Caco-2 (cell line): ENCODE measurements at regions of chr11 and their contacts with region 1.

Region 1: GRCh38 chr11:112086422-112087191 is at the starts of genes SDHD and TIMM8B:
- DNase-seq: peak; percentile 99
- H3K4me3 ChIP-seq: peak within 1 kb of the TSS; percentile 59
- H3K4me3 Mint-ChIP-seq: peak within 1 kb of the TSS; percentile 95
- H3K27ac Mint-ChIP-seq: peak within 1 kb of the TSS; percentile 98
- H3K4me1 ChIP-seq: peaks cover 4% of the 10 kb centered on the region; the same call in 1 of the 2 replicates
- H3K4me1 Mint-ChIP-seq: peaks cover 17% of the 10 kb centered on the region
- H3K27me3 ChIP-seq: no peaks in the 10 kb centered on the region
- H3K27me3 Mint-ChIP-seq: no peaks in the 10 kb centered on the region
- CTCF ChIP-seq: peak in 1 of 2 experiments; percentile 73
- total RNA-seq, gene SDHD: 157 and 166 TPM in 2 replicates
- total RNA-seq, gene TIMM8B: 147 and 154 TPM in 2 replicates

Region 2: GRCh38 chr11:112074026-112074811 is 12.4 kb before region 1 on chr11 and contains the start of gene NKAPD1:
- CTCF ChIA-PET with region 1: no interaction called
- POLR2A ChIA-PET with region 1: no interaction called
- intact Hi-C with region 1: loop called (anchors 1 kb)
- DNase-seq: peak; percentile 89 to 90
- H3K4me3 ChIP-seq: peak within 1 kb of the TSS; percentile 63
- H3K4me3 Mint-ChIP-seq: peak within 1 kb of the TSS; percentile 86
- H3K27ac Mint-ChIP-seq: peak within 1 kb of the TSS; percentile 98
- H3K4me1 ChIP-seq: no peaks in the 10 kb centered on the region
- H3K4me1 Mint-ChIP-seq: peaks cover 12% of the 10 kb centered on the region
- H3K27me3 ChIP-seq: no peaks in the 10 kb centered on the region
- H3K27me3 Mint-ChIP-seq: no peaks in the 10 kb centered on the region
- CTCF ChIP-seq: peak in 1 of 2 experiments; percentile 13
- total RNA-seq, gene NKAPD1: 36.9 and 37.4 TPM in 2 replicates

Region 3: GRCh38 chr11:112302231-112302732 is 215.7 kb after region 1 on chr11:
- CTCF ChIA-PET with region 1: no interaction called
- POLR2A ChIA-PET with region 1: no interaction called
- intact Hi-C with region 1: no loop called
- DNase-seq: no peak
- H3K4me3 ChIP-seq: no peak overlapping the region
- H3K4me3 Mint-ChIP-seq: no peak overlapping the region
- H3K27ac Mint-ChIP-seq: no peak overlapping the region
- H3K4me1 ChIP-seq: peaks cover 7% of the 10 kb centered on the region
- H3K4me1 Mint-ChIP-seq: peaks cover 6% of the 10 kb centered on the region
- H3K27me3 ChIP-seq: no peaks in the 10 kb centered on the region
- H3K27me3 Mint-ChIP-seq: peaks cover 4% of the 10 kb centered on the region
- CTCF ChIP-seq: no peak

Region 4: GRCh38 chr11:112364962-112365481 is 278.4 kb after region 1 on chr11:
- CTCF ChIA-PET with region 1: no interaction called
- POLR2A ChIA-PET with region 1: no interaction called
- intact Hi-C with region 1: no loop called
- DNase-seq: no peak
- H3K4me3 ChIP-seq: no peak overlapping the region
- H3K4me3 Mint-ChIP-seq: no peak overlapping the region
- H3K27ac Mint-ChIP-seq: no peak overlapping the region
- H3K4me1 ChIP-seq: no peaks in the 10 kb centered on the region
- H3K4me1 Mint-ChIP-seq: no peaks in the 10 kb centered on the region
- H3K27me3 ChIP-seq: no peaks in the 10 kb centered on the region
- H3K27me3 Mint-ChIP-seq: peaks cover 11% of the 10 kb centered on the region
- CTCF ChIP-seq: no peak